Sciatic nerve (tissue), 2 donors: ENCODE measurements at regions of chr5 and their contacts with region 1.

Region 1: DNA sequence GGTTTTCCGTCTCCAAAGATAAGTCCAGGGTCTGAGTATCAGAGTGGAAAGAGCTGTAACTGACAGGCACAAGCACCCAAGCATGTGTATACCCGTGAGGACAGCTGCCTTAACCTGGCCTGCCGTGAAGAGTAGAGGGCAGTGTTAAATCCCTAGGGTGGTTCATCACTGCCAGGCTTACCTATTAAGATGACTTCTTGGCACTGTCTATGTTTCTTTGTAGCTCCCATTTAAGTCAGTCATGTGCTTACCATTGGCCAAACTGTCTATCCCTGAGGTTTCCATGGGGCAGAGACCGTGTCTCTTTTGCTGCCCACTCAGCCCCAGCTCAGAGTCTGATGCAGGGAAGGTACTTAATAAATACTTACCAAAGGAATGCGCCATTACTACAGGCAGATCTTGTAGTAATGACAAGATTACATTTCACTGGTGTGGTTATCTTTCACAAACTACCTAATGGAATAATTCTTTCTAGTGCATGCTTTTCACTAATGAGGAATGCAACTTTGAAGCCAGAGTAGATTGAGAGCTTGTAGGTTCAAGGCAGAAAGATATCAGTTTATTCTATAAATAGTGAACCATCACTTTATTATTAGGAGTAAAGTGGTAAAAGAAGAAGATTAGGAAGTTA is 64.2 kb downstream of the SNX24 start:
- DNase-seq: no peak
- ATAC-seq: no peak

Region 2: GRCh38 chr5:122741707-122742106 is 167.9 kb before region 1 on chr5:
- intact Hi-C with region 1: loop called (anchors 5 kb)
- DNase-seq: no peak
- ATAC-seq: no peak

Region 3: DNA sequence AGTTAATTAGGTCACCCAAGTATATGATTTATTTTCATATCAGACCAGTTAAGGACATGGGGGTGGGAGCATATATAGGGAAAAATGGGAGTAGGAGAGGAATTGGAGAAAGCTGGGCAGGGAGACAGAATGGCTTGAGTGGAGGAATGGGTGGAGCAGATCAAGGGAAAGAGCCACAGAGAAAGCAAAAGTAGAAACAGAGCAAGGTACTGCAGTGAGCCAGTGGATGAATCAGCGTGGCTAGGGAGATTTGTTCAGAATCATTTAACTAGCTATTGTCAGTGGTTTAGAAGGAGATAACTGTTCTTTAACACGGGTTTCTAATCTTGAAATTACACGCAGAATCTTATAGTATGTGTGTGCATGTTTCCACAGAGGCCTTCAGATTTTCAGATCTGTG is 26.7 kb before region 1 on chr5:
- intact Hi-C with region 1: no loop called
- DNase-seq: no peak
- ATAC-seq: no peak